AG04449 (cell line): ENCODE measurements at regions of chr9 and their contacts with region 1.

Region 1: GRCh38 chr9:98207606-98208005 is 15.2 kb upstream of the CORO2A start:
- DNase-seq: no peak
- H3K4me3 ChIP-seq: no peak overlapping the region
- CTCF ChIP-seq: peak; percentile 12

Region 2: DNA sequence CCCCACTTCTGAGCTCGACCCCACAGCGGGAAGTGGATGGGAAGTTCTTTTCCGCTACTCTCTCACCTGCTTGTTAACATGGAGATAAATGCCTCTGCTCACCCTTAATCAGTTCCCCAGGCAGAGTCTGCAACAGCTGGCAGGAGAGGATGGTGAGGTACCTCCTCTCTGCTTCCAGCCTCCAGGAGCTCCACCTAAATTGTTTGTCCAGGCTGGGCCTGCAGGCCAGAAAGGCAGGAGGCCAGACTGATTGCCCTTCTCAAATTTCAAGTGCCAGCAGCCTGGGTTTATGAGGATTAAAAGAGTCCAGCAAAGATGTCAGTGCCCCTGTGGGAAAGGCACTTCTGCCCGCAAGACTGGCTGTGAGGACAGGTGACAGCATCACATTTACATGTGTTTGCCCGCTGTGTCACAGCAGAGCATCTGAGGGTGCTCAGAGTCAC is 35.0 kb before region 1 on chr9:
- CTCF ChIA-PET with region 1: no interaction called
- POLR2A ChIA-PET with region 1: no interaction called
- DNase-seq: no peak
- H3K4me3 ChIP-seq: no peak overlapping the region
- CTCF ChIP-seq: no peak

Region 3: GRCh38 chr9:98263482-98264357 is 56.1 kb after region 1 on chr9:
- CTCF ChIA-PET with region 1: interaction called, 157 read pairs
- POLR2A ChIA-PET with region 1: no interaction called
- DNase-seq: peak; percentile 29
- H3K4me3 ChIP-seq: no peak overlapping the region
- CTCF ChIP-seq: peak; percentile 96